MCF 10A (cell line): ENCODE measurements at regions of chr12 and their contacts with region 1.

Region 1: DNA sequence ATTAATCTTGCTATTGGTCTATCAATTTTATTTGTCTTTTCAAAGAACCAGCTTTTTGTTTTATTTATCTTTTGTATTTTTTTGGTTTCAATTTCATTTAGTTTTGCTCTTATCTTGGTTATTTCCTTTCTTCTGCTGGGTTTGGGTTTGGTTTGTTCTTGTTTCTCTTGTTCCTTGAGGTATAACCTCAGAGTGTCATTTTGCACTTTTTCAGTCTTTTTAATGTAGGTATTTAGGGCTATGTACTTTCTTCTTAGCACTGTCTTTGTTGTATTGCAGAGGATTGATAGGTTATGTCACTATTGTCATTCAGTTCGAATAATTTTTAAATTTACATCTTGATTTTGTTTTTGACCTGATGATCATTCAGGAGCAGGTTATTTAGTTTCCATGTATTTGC is 92.7 kb upstream of the DCD start:
- DNase-seq: no peak
- H3K4me3 Mint-ChIP-seq: no peak overlapping the region
- H3K27ac Mint-ChIP-seq: no peak overlapping the region
- H3K4me1 Mint-ChIP-seq: no peaks in the 10 kb centered on the region
- H3K27me3 Mint-ChIP-seq: peaks cover 43% of the 10 kb centered on the region
- CTCF ChIP-seq: no peak

Region 2: DNA sequence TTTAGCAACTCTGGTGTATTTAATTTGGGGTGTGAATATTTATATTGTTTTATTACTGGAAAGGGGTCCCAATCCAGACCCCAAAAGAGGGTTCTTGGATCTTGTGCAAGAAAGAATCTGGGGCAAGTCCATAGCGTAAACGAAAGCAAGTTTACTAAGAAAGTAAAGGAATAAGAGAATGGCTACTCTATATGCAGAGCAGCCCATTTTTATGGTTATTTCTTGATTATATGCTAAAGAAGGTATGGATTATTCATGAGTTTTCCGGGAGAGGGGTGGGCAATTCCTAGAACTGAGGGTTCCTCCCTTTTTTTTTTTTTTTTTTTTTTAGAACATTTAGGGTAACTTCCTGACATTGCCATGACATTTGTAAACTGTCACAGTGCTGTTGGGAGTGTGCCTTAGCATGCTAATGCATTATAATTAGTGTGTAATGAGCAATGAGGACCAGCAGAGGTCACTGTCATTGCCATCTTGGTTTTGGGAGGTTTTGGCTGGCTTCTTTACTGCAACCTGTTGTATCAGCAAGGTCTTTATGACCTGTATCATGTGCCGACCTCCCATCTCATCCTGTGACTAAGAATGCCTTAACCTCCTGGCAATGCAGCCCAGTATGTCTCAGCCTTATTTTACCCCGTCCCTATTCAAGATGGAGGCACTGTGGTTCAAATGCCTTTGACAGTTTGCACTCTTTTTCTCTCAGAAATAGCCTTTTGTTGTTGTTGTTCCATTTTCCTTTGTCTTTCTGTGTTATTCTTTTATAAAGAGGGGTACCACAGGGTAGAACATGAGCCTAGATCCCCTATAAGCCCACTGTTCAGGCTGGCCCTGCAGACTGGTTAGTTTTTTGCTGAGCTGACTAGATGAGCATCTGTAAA is 17.3 kb before region 1 on chr12:
- CTCF ChIA-PET with region 1: interaction called, 13 read pairs
- POLR2A ChIA-PET with region 1: interaction called, 3 read pairs
- intact Hi-C with region 1: no loop called
- DNase-seq: peak; percentile 60
- H3K4me3 Mint-ChIP-seq: no peak overlapping the region
- H3K27ac Mint-ChIP-seq: no peak overlapping the region
- H3K4me1 Mint-ChIP-seq: no peaks in the 10 kb centered on the region
- H3K27me3 Mint-ChIP-seq: peaks cover 79% of the 10 kb centered on the region
- CTCF ChIP-seq: peak; percentile 45

Region 3: DNA sequence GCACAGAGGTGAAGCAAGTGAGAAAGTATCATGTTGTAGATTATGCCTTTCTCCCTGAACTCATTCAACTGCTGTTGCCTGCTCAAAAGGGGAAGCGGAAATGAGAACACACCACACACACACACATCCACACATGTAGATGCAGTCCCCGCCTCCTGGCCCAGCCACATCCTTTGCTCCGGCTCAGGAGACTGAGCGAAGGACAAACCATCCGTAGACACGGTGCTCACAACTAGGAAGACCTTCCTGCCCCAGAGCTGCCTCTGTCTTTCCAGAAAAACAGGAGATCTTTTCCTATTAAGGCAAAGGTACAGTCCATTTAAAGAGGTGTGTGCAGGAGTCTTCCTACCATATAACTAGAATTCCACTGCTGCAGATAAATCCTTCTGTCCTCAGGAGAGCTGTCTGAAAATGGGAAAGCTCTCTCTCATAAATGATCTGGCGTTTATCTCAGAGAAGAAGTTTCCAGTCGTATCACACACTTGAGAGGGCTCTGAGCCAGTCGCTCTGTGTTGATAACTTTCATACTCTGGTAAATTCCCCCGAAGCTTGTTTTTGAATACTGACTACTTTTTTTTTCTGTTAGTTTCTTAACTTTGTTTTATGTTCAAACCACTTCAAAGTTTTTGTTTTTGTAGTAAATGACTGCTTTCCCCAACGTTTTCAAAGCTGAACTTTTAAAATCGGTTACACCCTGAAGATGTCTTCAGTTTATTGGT is 243.9 kb after region 1 on chr12 and contains the start of gene TESPA1:
- CTCF ChIA-PET with region 1: no interaction called
- POLR2A ChIA-PET with region 1: no interaction called
- intact Hi-C with region 1: no loop called
- DNase-seq: no peak
- H3K4me3 Mint-ChIP-seq: no peak within 1 kb of the TSS
- H3K27ac Mint-ChIP-seq: no peak within 1 kb of the TSS
- H3K4me1 Mint-ChIP-seq: no peaks in the 10 kb centered on the region
- H3K27me3 Mint-ChIP-seq: peaks cover 77% of the 10 kb centered on the region
- CTCF ChIP-seq: no peak
- total RNA-seq, gene TESPA1: not detected in 2 replicates